ENCODE measurements at regions of chr2 and their contacts with region 1.

Region 1: DNA sequence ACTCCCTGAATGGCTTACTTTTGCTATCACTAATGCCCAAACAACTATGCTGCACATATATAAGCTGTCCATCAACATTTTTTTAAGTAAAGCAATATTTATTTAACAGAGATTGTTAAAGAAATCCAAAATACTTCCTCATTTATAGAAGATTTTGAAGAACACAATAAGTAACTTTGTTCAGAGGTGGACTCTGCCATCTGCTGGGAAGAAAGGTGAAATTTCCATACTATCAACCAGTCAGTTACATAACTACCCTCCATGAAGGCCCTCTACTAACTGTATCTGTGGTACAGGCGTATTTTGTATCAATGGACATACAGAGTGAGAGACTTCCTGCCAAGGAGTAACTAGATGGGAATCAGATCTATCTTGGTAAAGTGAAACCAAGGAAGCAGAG is 106.0 kb downstream of the DTNB start:
- DNase-seq: no peak
- H3K4me3 Mint-ChIP-seq: no peak overlapping the region
- H3K27ac Mint-ChIP-seq: no peak overlapping the region
- H3K4me1 Mint-ChIP-seq: peaks cover 16% of the 10 kb centered on the region
- H3K27me3 Mint-ChIP-seq: no peaks in the 10 kb centered on the region

Region 2: GRCh38 chr2:25309402-25309801 is 258.0 kb before region 1 on chr2:
- intact Hi-C with region 1: loop called (anchors 1 kb)
- DNase-seq: no peak
- H3K4me3 Mint-ChIP-seq: peak overlapping the region; percentile 19
- H3K27ac Mint-ChIP-seq: peak overlapping the region; percentile 18
- H3K4me1 Mint-ChIP-seq: peaks cover 58% of the 10 kb centered on the region
- H3K27me3 Mint-ChIP-seq: no peaks in the 10 kb centered on the region

Measured in activated T-helper 1 cell treated with anti-CD3 and anti-CD28 coated beads, Interleukin-12 subunit alpha, Interleukin-12 subunit beta, Interleukin-2, Interleukin-4 antibody, amounts not matched to agents 30 ng/mL and 10 ng/mL and 1 ng/mL, durations not matched to agents 14 hours and 24 hours and 36 hours (primary cell).